ENCODE measurements at regions of chr3 and their contacts with region 1.

Region 1: DNA sequence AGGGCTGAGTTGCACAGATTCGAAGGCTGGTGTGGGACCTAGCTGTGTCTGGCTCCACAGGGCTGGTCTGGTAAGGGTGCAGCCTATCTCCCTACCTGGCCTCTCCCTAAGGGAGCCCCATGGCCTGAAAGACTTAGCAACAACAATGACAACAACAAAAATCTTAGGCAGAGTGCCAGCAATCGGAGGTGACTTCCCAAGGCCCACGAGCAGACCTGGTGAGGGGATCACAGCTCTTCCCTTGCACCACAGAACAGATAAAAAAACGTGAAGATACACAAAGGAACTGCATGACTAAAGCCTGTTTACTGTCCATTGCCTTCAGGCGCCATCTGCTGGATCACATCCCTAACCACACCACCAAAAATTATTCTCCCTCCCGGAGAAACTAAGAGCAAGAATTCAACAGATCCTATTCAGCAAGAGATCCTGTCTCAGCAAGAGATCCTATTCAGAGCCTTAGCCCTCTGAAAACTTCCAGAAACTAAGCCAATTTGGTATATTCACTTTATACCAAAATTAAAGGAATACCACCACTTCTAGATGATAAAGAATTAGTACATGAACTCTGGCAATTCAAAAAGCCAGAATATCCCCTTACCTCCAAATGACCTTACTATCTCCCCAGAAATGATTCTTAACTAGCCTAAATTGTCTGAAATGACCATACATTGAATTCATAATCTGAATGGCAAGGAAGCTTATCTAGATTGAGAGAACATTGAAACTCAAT is 24.1 kb upstream of the OR5K4 start:
- DNase-seq: peak; percentile 69
- H3K4me3 Mint-ChIP-seq: no peak overlapping the region
- H3K27ac Mint-ChIP-seq: no peak overlapping the region
- H3K4me1 Mint-ChIP-seq: no peaks in the 10 kb centered on the region
- H3K27me3 Mint-ChIP-seq: peaks cover 91% of the 10 kb centered on the region
- CTCF ChIP-seq: peak; percentile 75

Region 2: GRCh38 chr3:98048586-98048985 is 281.0 kb before region 1 on chr3:
- CTCF ChIA-PET with region 1: interaction called, 33 read pairs
- POLR2A ChIA-PET with region 1: interaction called, 3 read pairs
- intact Hi-C with region 1: no loop called
- DNase-seq: no peak
- H3K4me3 Mint-ChIP-seq: no peak overlapping the region
- H3K27ac Mint-ChIP-seq: no peak overlapping the region
- H3K4me1 Mint-ChIP-seq: no peaks in the 10 kb centered on the region
- H3K27me3 Mint-ChIP-seq: peaks cover 70% of the 10 kb centered on the region
- CTCF ChIP-seq: no peak

Region 3: DNA sequence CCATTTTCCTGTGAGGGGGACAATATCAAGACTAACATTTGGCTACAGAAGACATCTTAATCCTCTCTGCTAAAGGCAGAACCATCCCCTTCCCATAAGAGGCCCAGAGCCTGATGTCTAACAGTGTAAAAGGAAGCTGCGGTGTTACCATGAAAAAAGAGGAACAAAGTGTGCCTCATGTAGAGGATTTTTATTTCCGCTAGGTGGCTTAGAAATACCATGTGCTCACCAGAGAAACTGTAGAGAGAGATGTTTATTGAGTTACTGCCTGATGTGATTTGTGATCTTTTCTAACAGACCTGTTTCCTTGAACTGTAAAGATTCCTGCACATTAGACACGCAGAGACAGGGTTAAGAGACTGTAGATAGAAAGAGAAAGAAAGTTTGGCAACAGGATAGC is 141.0 kb before region 1 on chr3:
- CTCF ChIA-PET with region 1: interaction called, 4 read pairs
- POLR2A ChIA-PET with region 1: no interaction called
- intact Hi-C with region 1: loop called (anchors 1 kb)
- DNase-seq: peak; percentile 29
- H3K4me3 Mint-ChIP-seq: no peak overlapping the region
- H3K27ac Mint-ChIP-seq: no peak overlapping the region
- H3K4me1 Mint-ChIP-seq: no peaks in the 10 kb centered on the region
- H3K27me3 Mint-ChIP-seq: no peaks in the 10 kb centered on the region
- CTCF ChIP-seq: peak; percentile 34

Region 4: GRCh38 chr3:98343647-98344507 is 14.3 kb after region 1 on chr3:
- CTCF ChIA-PET with region 1: interaction called, 20 read pairs
- POLR2A ChIA-PET with region 1: interaction called, 3 read pairs
- intact Hi-C with region 1: no loop called
- DNase-seq: peak; percentile 86
- H3K4me3 Mint-ChIP-seq: no peak overlapping the region
- H3K27ac Mint-ChIP-seq: no peak overlapping the region
- H3K4me1 Mint-ChIP-seq: peaks cover 5% of the 10 kb centered on the region
- H3K27me3 Mint-ChIP-seq: peaks cover 57% of the 10 kb centered on the region
- CTCF ChIP-seq: peak; percentile 66

Region 5: DNA sequence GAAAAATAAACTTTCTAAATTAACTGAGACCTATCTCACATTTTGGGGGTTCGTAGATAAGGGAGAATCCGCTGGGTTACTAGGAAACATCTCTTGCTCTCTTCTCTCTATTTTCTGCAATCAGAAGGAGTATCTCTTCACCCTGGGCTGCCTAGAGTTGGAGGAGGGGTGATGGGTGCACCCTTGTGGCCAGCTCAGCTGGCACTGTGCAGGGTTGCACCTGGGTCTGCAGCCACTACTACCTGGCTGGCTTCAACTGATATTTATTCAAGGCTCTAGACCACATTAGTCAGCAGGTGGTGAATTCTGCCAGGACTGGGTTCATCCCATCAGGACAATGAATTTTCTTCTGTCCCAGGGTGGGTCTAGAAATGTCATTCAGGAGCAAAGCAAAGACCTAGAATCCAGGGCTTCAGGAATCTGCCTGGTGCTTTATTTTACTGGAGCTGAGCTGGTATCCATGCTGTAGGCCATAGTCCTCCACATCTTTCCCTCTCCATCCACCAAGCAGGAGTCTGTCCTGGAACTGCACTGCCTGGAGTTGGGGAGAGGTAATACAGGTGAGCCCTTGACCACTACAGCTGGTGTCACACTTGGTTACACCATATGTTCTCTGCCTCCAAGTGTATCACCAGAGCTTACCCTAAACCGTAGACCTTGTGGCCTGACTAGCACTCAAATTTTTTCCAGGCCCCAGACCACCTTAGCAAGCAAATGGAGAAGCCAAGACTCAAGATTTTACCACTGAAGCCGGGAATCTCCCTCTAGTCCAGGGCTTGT is 38.1 kb after region 1 on chr3:
- CTCF ChIA-PET with region 1: no interaction called
- POLR2A ChIA-PET with region 1: no interaction called
- intact Hi-C with region 1: no loop called
- DNase-seq: no peak
- H3K4me3 Mint-ChIP-seq: no peak overlapping the region
- H3K27ac Mint-ChIP-seq: no peak overlapping the region
- H3K4me1 Mint-ChIP-seq: no peaks in the 10 kb centered on the region
- H3K27me3 Mint-ChIP-seq: no peaks in the 10 kb centered on the region
- CTCF ChIP-seq: no peak

Region 6: GRCh38 chr3:98770261-98771039 is 440.9 kb after region 1 on chr3:
- CTCF ChIA-PET with region 1: no interaction called
- POLR2A ChIA-PET with region 1: no interaction called
- intact Hi-C with region 1: no loop called
- DNase-seq: no peak
- H3K4me3 Mint-ChIP-seq: no peak overlapping the region
- H3K27ac Mint-ChIP-seq: peak overlapping the region; percentile 87
- H3K4me1 Mint-ChIP-seq: peaks cover 12% of the 10 kb centered on the region
- H3K27me3 Mint-ChIP-seq: no peaks in the 10 kb centered on the region
- CTCF ChIP-seq: no peak